Activated CD8-positive, alpha-beta T cell treated with anti-CD3 and anti-CD28 coated beads for 36 hours (primary cell): ENCODE measurements at regions of chr16 and their contacts with region 1.

Region 1: GRCh38 chr16:81885976-81886586 is 107.0 kb downstream of the PLCG2 start:
- DNase-seq: peak; percentile 22
- ATAC-seq: peak; percentile 81
- H3K4me3 Mint-ChIP-seq: no peak overlapping the region
- H3K27ac Mint-ChIP-seq: no peak overlapping the region
- H3K4me1 Mint-ChIP-seq: no peaks in the 10 kb centered on the region
- H3K27me3 Mint-ChIP-seq: no peaks in the 10 kb centered on the region
- CTCF ChIP-seq: peak; percentile 83

Region 2: DNA sequence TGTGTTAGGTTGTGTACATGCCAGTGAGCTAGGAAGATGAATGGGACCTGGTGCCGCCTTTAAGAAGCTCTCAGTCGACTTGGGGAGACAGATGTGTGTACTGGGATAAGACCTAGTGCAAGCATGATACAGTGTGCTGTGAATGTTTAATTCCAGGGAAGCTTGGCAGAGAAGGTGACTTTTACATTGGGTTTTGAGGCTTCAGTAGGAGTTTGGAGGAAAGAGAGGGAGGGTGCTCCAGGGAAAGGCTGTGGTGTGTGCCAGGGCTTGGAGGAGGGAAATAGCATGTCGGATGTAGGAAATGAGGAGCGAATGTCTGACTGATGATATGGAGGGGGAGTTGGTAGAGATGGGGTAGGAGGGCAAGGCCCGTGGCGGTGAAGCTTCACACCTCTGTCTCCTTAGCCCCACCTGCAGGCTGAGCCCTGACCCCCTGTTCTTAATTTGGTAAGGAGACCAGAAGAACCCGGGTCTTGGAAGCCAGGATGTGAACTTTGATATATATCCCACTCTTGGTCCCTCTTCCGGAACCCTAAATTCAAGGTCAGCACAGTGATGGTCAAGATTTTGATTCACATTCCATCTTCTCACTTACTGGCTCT is 30.4 kb before region 1 on chr16:
- CTCF ChIA-PET with region 1: interaction called, 10 read pairs
- POLR2A ChIA-PET with region 1: no interaction called
- intact Hi-C with region 1: no loop called
- DNase-seq: no peak
- ATAC-seq: no peak
- H3K4me3 Mint-ChIP-seq: no peak overlapping the region
- H3K27ac Mint-ChIP-seq: no peak overlapping the region
- H3K4me1 Mint-ChIP-seq: no peaks in the 10 kb centered on the region
- H3K27me3 Mint-ChIP-seq: no peaks in the 10 kb centered on the region
- CTCF ChIP-seq: no peak

Region 3: GRCh38 chr16:81901483-81901882 is 15.4 kb after region 1 on chr16:
- CTCF ChIA-PET with region 1: interaction called, 13 read pairs
- POLR2A ChIA-PET with region 1: no interaction called
- intact Hi-C with region 1: no loop called
- DNase-seq: no peak
- ATAC-seq: no peak
- H3K4me3 Mint-ChIP-seq: no peak overlapping the region
- H3K27ac Mint-ChIP-seq: no peak overlapping the region
- H3K4me1 Mint-ChIP-seq: no peaks in the 10 kb centered on the region
- H3K27me3 Mint-ChIP-seq: no peaks in the 10 kb centered on the region
- CTCF ChIP-seq: no peak

Region 4: DNA sequence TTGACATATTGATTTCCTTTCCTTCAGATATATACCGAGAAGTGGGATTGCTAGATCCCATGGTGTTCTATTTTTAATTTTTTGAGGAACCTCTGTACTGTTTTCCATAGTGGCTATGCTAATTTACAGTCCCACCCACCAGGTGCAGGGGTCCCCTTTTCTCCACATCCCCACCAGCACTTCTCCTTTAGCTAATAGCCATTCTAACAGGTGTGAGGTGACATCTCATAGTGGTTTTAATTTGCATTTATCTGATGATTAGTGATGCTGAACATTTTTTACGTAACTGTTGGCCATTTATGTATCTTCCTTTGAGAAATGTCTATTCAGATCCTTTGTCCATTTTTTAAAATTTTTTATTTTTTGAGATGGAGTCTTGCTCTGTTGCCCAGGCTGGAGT is 31.3 kb after region 1 on chr16:
- CTCF ChIA-PET with region 1: no interaction called
- POLR2A ChIA-PET with region 1: no interaction called
- intact Hi-C with region 1: no loop called
- DNase-seq: no peak
- ATAC-seq: no peak
- H3K4me3 Mint-ChIP-seq: no peak overlapping the region
- H3K27ac Mint-ChIP-seq: no peak overlapping the region
- H3K4me1 Mint-ChIP-seq: no peaks in the 10 kb centered on the region
- H3K27me3 Mint-ChIP-seq: no peaks in the 10 kb centered on the region
- CTCF ChIP-seq: no peak

Region 5: DNA sequence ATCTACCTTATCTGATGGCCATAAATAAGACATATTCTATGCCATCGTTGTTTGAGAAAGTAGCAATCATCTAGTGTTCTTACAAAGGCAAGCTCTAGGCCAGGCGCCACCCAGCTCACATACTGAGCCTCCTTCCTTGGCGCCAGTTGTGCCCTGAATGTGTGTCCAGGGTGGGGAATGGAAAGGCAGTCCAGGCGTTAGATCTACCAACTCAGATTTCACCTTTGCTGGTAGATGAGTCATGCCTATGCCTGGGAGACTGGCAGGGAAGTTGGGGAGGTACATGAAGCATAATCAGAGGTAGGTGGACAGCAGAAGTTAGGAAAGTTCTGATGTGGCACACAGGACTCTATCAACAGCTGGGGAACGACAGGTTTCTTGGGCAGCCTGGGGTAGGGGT is 101.6 kb after region 1 on chr16:
- CTCF ChIA-PET with region 1: no interaction called
- POLR2A ChIA-PET with region 1: no interaction called
- intact Hi-C with region 1: no loop called
- DNase-seq: no peak
- ATAC-seq: no peak
- H3K4me3 Mint-ChIP-seq: no peak overlapping the region
- H3K27ac Mint-ChIP-seq: no peak overlapping the region
- H3K4me1 Mint-ChIP-seq: no peaks in the 10 kb centered on the region
- H3K27me3 Mint-ChIP-seq: peaks cover 3% of the 10 kb centered on the region
- CTCF ChIP-seq: no peak